Panc1 (cell line): ENCODE measurements at regions of chr17 and their contacts with region 1.

Region 1: DNA sequence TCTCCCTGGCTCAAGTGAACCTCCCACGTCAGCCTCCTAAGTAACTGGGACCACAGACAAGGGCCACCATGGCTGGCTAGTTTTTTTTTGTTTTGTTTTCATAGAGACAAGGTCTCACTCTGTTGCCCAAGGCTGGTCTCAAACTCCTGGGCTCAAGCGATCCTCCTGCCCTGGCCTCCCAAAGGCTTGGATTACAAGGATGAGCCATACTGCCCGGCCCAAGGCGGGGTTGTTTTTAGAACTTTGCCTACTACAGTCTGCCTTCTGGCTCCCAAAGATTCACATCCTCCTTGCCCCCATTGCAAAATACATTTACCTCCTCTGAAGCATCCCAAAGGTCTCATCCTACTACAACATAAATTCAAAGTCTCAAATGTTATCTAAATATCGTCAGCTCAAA is 49.5 kb upstream of the PHOSPHO1 start:
- DNase-seq: no peak
- ATAC-seq: no peak
- H3K4me3 ChIP-seq: no peak overlapping the region
- H3K27ac ChIP-seq: no peak overlapping the region
- H3K4me1 ChIP-seq: no peaks in the 10 kb centered on the region
- H3K27me3 ChIP-seq: no peaks in the 10 kb centered on the region
- CTCF ChIP-seq: no peak

Region 2: GRCh38 chr17:49157784-49158183 is 122.3 kb before region 1 on chr17:
- CTCF ChIA-PET with region 1: no interaction called
- POLR2A ChIA-PET with region 1: no interaction called
- in situ Hi-C with region 1: no loop called
- intact Hi-C with region 1: no loop called
- DNase-seq: no peak
- ATAC-seq: no peak
- H3K4me3 ChIP-seq: no peak overlapping the region
- H3K27ac ChIP-seq: no peak overlapping the region
- H3K4me1 ChIP-seq: no peaks in the 10 kb centered on the region
- H3K27me3 ChIP-seq: 0 out of 2 replicates have a peak, but pooled peaks cover 2% of the 10 kb centered on the region
- CTCF ChIP-seq: no peak

Region 3: DNA sequence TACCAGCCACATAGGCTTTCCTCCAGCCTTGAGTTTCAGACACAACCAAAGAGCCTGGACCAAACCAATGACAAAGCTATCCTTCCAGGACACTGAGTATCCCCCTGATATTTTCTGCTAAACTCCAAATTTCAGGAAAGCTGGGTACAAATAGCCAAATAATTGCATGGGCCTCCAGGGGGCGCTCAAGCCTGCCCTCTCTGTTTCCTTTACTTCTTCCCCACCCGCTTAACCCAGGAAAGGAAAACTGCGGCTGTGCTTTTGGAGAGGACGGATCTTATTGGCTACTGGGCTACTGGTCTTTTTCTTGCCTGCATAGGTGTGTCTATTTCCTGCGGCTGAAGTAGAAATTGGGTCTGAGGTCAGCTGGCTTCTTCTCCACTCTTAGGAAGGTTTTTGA is 99.8 kb before region 1 on chr17:
- CTCF ChIA-PET with region 1: interaction called, 11 read pairs
- POLR2A ChIA-PET with region 1: no interaction called
- in situ Hi-C with region 1: no loop called
- intact Hi-C with region 1: no loop called
- DNase-seq: peak; percentile 28
- ATAC-seq: peak; percentile 83
- H3K4me3 ChIP-seq: no peak overlapping the region
- H3K27ac ChIP-seq: no peak overlapping the region
- H3K4me1 ChIP-seq: no peaks in the 10 kb centered on the region; the same call in 1 of the 2 replicates
- H3K27me3 ChIP-seq: no peaks in the 10 kb centered on the region
- CTCF ChIP-seq: peak; percentile 99

Region 4: DNA sequence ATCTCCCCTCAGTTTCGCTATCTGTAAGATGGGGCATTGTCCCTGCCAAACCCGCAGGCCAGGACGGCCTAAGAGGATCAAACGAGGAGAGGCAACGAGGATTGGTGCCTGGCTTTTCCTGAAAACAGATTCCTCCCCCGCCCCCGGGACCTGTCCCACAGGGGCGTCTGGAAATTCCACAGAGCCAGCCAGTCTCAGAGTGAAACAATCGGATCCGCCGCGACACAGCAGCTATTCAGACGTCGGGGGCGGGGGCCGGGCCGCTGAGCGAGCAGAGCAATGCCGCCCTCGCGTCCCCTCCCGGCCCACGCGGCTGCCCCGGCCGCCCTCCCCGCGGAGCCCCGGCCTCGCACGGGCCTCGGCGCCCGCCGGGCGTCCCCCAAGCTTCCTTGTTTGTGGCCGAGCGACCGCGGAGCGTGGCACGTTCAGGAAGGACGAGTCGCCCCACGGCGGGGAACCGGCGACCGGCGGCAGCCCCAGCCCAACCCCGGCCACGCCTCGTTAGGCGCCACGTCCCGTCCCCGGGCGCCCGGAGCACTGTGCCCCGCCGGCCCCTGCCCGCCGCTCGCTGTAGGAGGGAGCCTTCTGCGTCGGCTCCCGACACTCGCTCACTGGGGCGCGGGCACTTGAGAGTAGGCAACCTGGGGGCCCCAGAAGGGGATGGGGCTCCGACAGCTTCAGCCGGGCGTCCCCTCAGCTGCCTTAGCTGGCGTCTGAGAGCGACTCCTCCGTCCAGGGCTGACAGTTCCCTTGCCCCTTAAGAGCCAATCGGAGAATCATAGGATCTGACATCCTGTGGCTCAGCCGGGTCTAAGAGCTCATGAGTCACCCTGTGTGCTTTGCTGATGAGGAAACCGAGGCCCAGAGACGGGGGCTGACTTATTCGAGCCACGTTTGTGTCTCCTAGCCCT is 19.8 kb before region 1 on chr17:
- CTCF ChIA-PET with region 1: no interaction called
- POLR2A ChIA-PET with region 1: no interaction called
- in situ Hi-C with region 1: no loop called
- intact Hi-C with region 1: no loop called
- DNase-seq: peak; percentile 42
- ATAC-seq: peak; percentile 91
- H3K4me3 ChIP-seq: peak overlapping the region; percentile 50 to 76
- H3K27ac ChIP-seq: peak overlapping the region; percentile 29
- H3K4me1 ChIP-seq: no peaks in the 10 kb centered on the region
- H3K27me3 ChIP-seq: no peaks in the 10 kb centered on the region
- CTCF ChIP-seq: no peak